Calu3 (cell line): ENCODE measurements at regions of chr11 and their contacts with region 1.

Region 1: DNA sequence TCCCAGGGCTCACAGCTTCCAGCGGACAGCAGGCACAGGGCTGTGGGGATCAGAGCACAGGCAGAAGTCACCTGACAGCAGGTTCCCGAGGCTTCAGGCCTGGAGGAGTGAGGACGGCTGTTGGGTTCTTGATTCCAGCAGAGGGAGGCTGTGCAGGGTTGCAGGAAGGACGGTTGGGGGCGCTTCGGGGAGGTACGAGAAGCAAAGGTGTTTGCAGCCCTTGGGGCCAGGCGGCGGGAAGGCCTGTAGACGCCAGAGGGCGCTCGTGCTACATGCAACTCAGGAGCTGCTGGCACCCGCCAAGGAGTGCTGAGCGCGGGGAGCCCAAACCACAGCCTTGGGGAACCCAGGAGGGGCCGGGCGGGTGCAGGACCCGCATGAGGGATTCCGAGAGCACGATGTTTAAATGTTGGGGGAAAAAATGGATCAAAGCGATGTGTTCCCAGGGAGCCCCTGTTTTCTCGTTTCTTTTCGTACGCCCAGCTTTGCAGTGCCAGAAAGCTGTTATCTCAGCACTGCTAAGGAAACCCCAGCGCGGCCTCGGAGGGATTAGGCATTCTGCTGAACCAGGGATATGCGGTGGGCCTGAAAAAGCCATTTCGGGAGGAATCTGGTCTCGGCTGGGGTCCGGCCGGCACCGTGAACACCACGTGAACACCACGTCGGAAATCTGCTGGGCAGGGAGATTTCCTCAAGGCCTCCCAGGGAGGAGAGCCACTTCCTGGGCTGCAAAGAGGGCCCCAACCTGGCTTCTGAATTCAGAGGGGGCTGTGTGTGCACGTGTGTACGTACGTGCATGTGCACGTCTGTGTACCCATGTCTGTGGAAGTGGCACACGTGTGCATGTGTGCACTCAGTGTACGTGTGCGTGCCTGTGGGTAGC is 88.1 kb downstream of the KCNQ1 start:
- DNase-seq: peak; percentile 96
- H3K4me3 Mint-ChIP-seq: peak overlapping the region; percentile 39
- H3K27ac Mint-ChIP-seq: peak overlapping the region; percentile 26
- H3K4me1 Mint-ChIP-seq: peaks cover 15% of the 10 kb centered on the region
- H3K27me3 Mint-ChIP-seq: no peaks in the 10 kb centered on the region
- CTCF ChIP-seq: peak; percentile 98

Region 2: GRCh38 chr11:2428322-2428795 is 104.6 kb before region 1 on chr11:
- CTCF ChIA-PET with region 1: interaction called, 38 read pairs
- intact Hi-C with region 1: loop called (anchors 1 kb)
- DNase-seq: peak; percentile 88
- H3K4me3 Mint-ChIP-seq: no peak overlapping the region
- H3K27ac Mint-ChIP-seq: no peak overlapping the region
- H3K4me1 Mint-ChIP-seq: no peaks in the 10 kb centered on the region
- H3K27me3 Mint-ChIP-seq: peaks cover 31% of the 10 kb centered on the region
- CTCF ChIP-seq: peak; percentile 79

Region 3: DNA sequence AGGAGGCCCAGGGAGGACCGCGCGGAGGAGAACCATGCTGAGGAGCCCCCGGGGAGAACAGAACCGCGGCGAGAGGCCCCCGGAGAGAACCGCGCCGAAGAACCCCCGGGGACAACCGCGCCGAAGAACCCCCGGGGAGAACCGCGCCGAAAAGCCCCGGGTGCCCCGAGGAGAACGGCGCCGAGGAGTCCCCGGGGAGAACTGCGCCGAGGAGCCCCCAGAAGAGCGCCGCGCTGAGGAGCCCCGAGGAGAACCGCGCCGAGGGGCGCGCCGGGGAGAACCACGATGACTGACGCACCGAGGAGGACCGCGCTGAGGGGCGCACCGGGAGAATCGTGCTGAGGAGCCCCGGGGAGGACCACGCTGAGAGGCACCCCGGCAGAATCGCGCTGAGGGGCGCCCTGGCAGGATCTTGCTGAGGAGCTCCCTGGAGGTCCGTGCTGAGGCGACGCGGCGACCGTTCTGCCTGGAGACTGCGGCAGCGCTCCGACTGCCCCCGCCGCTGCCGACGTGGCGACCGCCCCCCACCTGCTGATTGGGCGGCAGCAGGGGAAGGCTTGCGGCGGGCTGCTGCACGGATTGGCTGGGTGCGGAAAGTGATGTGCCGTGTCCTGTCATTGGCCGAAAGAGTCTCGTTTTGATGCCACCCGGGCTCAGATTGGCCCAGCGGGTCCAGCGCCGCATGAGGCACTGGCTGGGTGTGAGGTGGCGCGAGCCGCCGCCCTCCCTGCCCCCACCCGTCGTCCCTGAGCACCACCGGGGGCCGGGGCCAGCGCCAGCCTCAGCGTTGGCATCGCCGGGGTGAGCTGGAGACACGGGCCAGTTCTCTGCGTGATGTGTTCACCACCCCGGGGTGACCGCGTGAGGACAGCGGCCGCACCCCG is 166.8 kb after region 1 on chr11 and contains the start of gene KCNQ1OT1:
- CTCF ChIA-PET with region 1: no interaction called
- intact Hi-C with region 1: loop called (anchors 10 kb)
- DNase-seq: peak; percentile 78
- H3K4me3 Mint-ChIP-seq: peak within 1 kb of the TSS; percentile 62
- H3K27ac Mint-ChIP-seq: peak within 1 kb of the TSS; percentile 30
- H3K4me1 Mint-ChIP-seq: no peaks in the 10 kb centered on the region
- H3K27me3 Mint-ChIP-seq: no peaks in the 10 kb centered on the region
- CTCF ChIP-seq: no peak
- total RNA-seq, gene KCNQ1OT1: 1.2 and 1.3 TPM in 2 replicates

Region 4: DNA sequence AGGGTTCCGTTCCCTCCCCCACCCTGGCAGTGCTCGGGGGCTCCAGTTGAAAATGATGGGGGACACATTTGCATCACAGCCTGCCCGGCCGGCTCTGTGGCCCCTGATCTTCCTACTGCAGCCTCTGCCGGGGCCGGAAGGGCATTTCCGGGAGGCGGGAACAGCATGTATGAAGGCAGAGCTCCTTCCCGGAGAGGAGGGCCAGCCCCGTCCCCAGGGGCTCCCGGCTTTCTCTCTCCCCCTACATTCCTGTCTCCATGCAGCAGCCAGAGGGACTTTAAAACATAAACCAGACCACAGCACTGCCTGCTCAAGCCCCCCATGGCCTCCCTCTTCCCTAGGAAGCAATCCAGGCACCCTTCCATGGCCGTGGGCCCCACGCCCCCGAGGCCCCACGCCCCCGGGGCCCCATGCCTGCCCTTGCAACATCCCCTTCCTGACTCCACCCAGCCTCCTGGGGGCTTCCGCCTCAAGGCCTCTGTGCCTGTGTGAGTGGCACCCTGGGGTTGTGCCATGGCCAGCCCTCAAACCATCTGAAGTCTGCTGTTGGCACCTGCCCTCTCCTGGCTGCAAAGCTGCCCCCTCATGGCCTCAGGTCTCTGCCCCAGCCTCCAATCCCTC is 279.5 kb after region 1 on chr11:
- CTCF ChIA-PET with region 1: no interaction called
- intact Hi-C with region 1: no loop called
- DNase-seq: no peak
- H3K4me3 Mint-ChIP-seq: no peak overlapping the region
- H3K27ac Mint-ChIP-seq: no peak overlapping the region
- H3K4me1 Mint-ChIP-seq: no peaks in the 10 kb centered on the region
- H3K27me3 Mint-ChIP-seq: peaks cover 66% of the 10 kb centered on the region
- CTCF ChIP-seq: no peak

Region 5: GRCh38 chr11:2885676-2886081 is 352.7 kb after region 1 on chr11 and contains the start of gene CDKN1C:
- CTCF ChIA-PET with region 1: interaction called, 100 read pairs
- intact Hi-C with region 1: loop called (anchors 1 kb)
- DNase-seq: peak; percentile 85
- H3K4me3 Mint-ChIP-seq: peak within 1 kb of the TSS; percentile 72
- H3K27ac Mint-ChIP-seq: peak within 1 kb of the TSS; percentile 56
- H3K4me1 Mint-ChIP-seq: no peaks in the 10 kb centered on the region
- H3K27me3 Mint-ChIP-seq: peaks cover 23% of the 10 kb centered on the region
- CTCF ChIP-seq: no peak
- total RNA-seq, gene CDKN1C: 2.2 and 2.4 TPM in 2 replicates

Region 6: DNA sequence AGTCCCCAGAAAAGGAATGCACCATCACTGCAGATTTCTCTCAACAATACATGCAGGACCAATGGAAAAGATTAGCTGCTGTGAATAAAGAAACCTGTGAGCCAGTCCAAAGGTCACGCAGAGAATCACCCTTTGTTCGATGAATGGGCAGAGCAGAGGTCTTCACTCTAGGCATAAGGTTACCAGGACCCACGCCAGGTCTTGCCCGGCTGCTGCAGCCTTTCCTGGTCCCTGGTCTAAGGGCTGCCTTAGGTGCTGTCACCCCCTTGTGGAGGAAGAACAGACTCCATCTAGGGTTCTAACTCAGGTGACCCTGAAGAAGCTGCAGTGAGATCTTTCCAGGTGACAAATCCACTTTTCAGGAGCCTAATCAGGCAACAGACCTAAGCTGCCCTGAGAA is 488.2 kb after region 1 on chr11:
- CTCF ChIA-PET with region 1: interaction called, 4 read pairs
- intact Hi-C with region 1: loop called (anchors 5 kb)
- DNase-seq: peak; percentile 66
- H3K4me3 Mint-ChIP-seq: no peak overlapping the region
- H3K27ac Mint-ChIP-seq: no peak overlapping the region
- H3K4me1 Mint-ChIP-seq: peaks cover 28% of the 10 kb centered on the region
- H3K27me3 Mint-ChIP-seq: no peaks in the 10 kb centered on the region
- CTCF ChIP-seq: peak; percentile 84